Activated naive CD4-positive, alpha-beta T cell treated with anti-CD3 and anti-CD28 coated beads for 36 hours (primary cell): ENCODE measurements at regions of chr4 and their contacts with region 1.

Region 1: GRCh38 chr4:113692809-113693411 is 68.6 kb downstream of the CAMK2D start:
- DNase-seq: no peak
- H3K4me3 Mint-ChIP-seq: peak overlapping the region; percentile 26
- H3K27ac Mint-ChIP-seq: peak overlapping the region; percentile 68
- H3K4me1 Mint-ChIP-seq: peaks cover 35% of the 10 kb centered on the region
- H3K27me3 Mint-ChIP-seq: no peaks in the 10 kb centered on the region

Region 2: GRCh38 chr4:113708250-113708649 is 15.3 kb after region 1 on chr4:
- CTCF ChIA-PET with region 1: interaction called, 7 read pairs
- intact Hi-C with region 1: loop called (anchors 1 kb)
- DNase-seq: no peak
- H3K4me3 Mint-ChIP-seq: no peak overlapping the region
- H3K27ac Mint-ChIP-seq: no peak overlapping the region
- H3K4me1 Mint-ChIP-seq: peaks cover 56% of the 10 kb centered on the region
- H3K27me3 Mint-ChIP-seq: no peaks in the 10 kb centered on the region

Region 3: DNA sequence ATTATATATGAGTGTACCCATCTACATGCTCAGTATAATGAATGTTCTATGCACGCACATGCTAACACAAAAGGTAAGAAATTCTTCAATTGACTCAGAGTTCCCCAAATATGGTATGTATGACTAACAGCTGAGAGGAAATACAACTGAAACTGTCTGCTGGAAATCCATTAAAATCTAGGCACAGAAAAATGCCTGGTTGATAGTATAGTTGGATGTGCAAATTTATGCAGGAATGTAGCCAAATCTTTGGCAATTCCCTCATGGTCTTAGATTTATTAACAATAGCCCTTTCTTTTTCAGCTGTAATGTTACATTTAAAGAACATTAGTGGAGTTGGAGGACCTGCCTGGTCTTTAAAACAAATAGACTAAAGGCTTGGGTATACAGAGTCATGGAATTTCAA is 63.1 kb after region 1 on chr4:
- CTCF ChIA-PET with region 1: no interaction called
- intact Hi-C with region 1: loop called (anchors 5 kb)
- DNase-seq: no peak
- H3K4me3 Mint-ChIP-seq: no peak overlapping the region
- H3K27ac Mint-ChIP-seq: no peak overlapping the region
- H3K4me1 Mint-ChIP-seq: peaks cover 47% of the 10 kb centered on the region
- H3K27me3 Mint-ChIP-seq: no peaks in the 10 kb centered on the region

Region 4: DNA sequence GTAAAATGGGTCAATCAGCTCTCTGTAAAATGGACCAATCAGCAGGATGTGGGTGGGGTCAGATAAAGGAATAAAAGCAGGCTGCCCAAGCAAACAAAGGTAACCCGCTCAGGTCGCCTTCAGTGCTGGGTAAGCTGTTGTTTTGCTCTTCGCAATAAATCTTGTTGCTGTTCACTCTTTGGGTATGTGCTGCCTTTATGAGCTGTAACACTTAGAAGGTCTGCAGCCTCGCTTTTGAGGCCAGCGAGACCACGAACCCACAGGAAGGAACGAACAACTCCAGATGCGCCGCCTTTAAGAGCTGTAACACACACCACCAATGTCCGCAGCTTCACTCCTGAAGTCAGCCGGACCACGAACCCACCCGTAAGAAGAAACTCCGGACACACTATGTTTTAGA is 80.1 kb after region 1 on chr4:
- CTCF ChIA-PET with region 1: no interaction called
- intact Hi-C with region 1: no loop called
- DNase-seq: peak; percentile 14
- H3K4me3 Mint-ChIP-seq: peak overlapping the region; percentile 65
- H3K27ac Mint-ChIP-seq: no peak overlapping the region
- H3K4me1 Mint-ChIP-seq: peaks cover 24% of the 10 kb centered on the region
- H3K27me3 Mint-ChIP-seq: no peaks in the 10 kb centered on the region